ENCODE measurements at regions of chr4 and their contacts with region 1.

Region 1: DNA sequence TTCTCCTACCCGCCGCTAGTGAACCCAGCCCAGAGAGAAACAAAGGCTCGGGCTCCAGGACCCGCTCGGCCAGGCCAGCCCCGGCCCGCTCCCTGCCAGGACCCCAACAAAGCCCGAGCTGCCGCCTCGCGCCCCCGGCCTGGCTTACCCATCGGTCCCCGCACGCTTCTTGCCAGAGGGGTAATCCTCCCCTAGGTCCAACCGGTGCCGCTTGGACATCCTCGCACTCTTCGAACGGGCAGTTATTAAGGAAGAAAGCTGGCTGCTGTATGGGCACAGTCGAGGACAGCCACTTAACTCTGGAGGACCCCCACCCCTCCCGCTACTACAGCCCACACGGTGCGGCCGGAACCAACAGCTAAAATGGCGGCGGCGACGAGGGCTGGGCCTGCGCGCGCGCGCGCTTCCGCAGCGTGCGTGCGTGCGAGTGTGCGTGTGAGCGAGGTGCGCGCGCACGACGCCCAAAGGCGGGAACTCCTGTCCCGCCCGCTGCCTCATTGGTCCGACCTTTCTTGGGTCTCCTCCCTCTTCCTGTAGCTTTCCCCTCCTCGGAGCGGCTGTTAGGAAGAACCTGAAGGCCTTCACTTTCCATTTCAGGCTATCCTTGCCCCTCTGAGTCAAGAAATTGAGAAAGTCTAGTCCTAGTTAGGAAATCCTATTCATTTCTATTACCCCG is at the start of gene DHX15:
- DNase-seq: peak; percentile 89
- H3K4me3 Mint-ChIP-seq: peak within 1 kb of the TSS; percentile 90
- H3K27ac Mint-ChIP-seq: peak within 1 kb of the TSS; percentile 88
- H3K4me1 Mint-ChIP-seq: no peaks in the 10 kb centered on the region
- H3K27me3 Mint-ChIP-seq: no peaks in the 10 kb centered on the region
- CTCF ChIP-seq: no peak
- total RNA-seq, gene DHX15: 161 and 169 TPM in 2 replicates

Region 2: GRCh38 chr4:24164054-24164693 is 420.1 kb before region 1 on chr4:
- CTCF ChIA-PET with region 1: no interaction called
- intact Hi-C with region 1: no loop called
- DNase-seq: no peak
- H3K4me3 Mint-ChIP-seq: no peak overlapping the region
- H3K27ac Mint-ChIP-seq: no peak overlapping the region
- H3K4me1 Mint-ChIP-seq: no peaks in the 10 kb centered on the region
- H3K27me3 Mint-ChIP-seq: no peaks in the 10 kb centered on the region
- CTCF ChIP-seq: no peak

Region 3: DNA sequence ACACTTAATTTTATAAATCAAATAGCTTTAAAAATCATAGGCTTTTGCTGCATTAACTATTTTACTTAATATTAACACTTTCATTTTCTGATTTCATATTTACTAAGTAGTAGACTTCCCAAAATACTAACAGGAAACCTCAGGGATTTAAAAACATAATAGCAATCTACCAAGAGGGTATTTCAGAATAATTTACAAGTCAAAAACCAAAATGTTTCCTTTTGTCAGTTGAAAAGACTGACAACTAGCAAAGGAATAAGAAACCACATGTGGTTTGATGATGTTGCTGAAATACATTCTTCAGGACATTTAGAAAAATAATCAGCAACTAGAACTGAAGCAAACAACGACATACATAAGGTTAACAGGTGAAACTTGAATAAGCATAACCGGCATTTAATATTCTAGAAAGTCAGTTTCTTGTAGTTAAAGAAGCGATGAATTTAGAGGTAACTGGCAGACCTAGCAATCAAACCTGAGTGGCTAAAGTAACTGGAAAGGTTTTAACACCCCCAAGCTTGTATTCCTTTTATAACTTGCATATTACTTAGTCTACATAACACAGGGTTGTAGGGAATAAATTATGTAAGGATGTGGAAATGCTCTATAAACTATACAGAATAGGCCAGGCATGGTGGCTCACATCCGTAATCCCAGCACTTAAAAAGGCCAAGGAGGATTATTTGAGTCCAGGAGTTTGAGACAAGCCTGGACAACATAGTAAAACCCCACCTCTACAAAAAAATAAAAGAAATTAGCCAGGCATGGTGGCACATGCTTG is 39.9 kb before region 1 on chr4:
- CTCF ChIA-PET with region 1: no interaction called
- intact Hi-C with region 1: loop called (anchors 5 kb)
- DNase-seq: no peak
- H3K4me3 Mint-ChIP-seq: no peak overlapping the region
- H3K27ac Mint-ChIP-seq: no peak overlapping the region
- H3K4me1 Mint-ChIP-seq: peaks cover 7% of the 10 kb centered on the region
- H3K27me3 Mint-ChIP-seq: no peaks in the 10 kb centered on the region
- CTCF ChIP-seq: no peak

Region 4: DNA sequence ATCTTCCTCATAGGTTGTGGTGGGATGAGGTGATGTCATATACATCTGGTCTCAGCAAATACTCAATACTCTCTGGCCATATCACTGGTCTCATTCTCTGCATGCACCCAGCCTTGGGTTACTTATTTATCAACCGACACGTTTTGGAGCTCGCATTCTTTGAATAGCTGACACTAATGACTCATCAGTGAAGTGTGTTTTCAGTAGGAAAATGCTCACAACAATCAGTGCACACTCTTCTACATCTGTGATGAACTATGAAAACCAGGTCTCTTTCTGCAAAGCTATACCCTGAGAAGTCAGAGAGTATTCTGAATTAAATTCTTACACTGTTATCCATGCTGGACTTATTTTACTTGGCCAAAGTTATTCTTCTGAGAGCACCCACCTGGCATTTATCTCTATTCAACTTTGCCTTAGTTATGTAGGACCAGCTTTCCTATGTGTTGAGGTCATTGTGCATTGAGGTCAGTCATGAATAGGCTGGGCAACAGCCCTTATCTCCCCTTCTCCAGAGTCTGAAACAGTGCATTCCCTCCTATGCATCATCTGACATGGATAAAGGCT is 58.8 kb after region 1 on chr4:
- CTCF ChIA-PET with region 1: no interaction called
- intact Hi-C with region 1: loop called (anchors 1 kb)
- DNase-seq: peak; percentile 51
- H3K4me3 Mint-ChIP-seq: peak overlapping the region; percentile 52
- H3K27ac Mint-ChIP-seq: peak overlapping the region; percentile 82
- H3K4me1 Mint-ChIP-seq: peaks cover 40% of the 10 kb centered on the region
- H3K27me3 Mint-ChIP-seq: no peaks in the 10 kb centered on the region
- CTCF ChIP-seq: no peak

Measured in Calu3 (cell line).